Vagina (tissue), 2 donors: ENCODE measurements at regions of chr12 and their contacts with region 1.

Region 1: GRCh38 chr12:3692616-3693365 is 60.1 kb downstream of the CRACR2A start:
- DNase-seq: no peak
- H3K4me3 ChIP-seq: no peak overlapping the region
- H3K27ac ChIP-seq: no peak overlapping the region
- H3K4me1 ChIP-seq: no peaks in the 10 kb centered on the region
- H3K27me3 ChIP-seq: no peaks in the 10 kb centered on the region
- CTCF ChIP-seq: no peak
- POLR2A ChIP-seq: no peak

Region 2: DNA sequence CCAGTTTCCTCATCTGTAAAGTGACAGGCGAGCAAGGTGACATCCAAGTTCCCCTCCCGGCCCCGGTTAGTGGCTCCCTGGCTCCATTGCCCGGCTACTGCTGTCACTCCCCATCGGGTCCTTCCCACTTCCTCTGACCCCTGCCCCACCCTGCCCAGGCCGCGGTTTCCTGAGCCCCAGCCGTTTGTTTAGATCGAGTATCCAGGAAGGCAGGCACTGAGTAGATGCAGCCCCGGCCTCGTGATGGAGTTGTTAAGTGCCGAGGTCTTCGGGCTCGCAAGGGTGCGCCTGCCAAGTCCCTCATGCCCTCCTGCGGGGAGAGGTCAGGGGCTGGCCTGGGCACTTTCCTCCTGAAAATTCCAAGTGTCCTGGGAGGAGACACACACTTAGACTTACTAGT is 678.1 kb before region 1 on chr12:
- intact Hi-C with region 1: loop called (anchors 5 kb)
- DNase-seq: no peak
- H3K4me3 ChIP-seq: no peak overlapping the region
- H3K27ac ChIP-seq: no peak overlapping the region
- H3K4me1 ChIP-seq: no peaks in the 10 kb centered on the region
- H3K27me3 ChIP-seq: no peaks in the 10 kb centered on the region
- CTCF ChIP-seq: no peak
- POLR2A ChIP-seq: no peak

Region 3: GRCh38 chr12:3920351-3921150 is 227.8 kb after region 1 on chr12:
- intact Hi-C with region 1: no loop called
- DNase-seq: no peak
- H3K4me3 ChIP-seq: no peak overlapping the region
- H3K27ac ChIP-seq: no peak overlapping the region
- H3K4me1 ChIP-seq: no peaks in the 10 kb centered on the region
- H3K27me3 ChIP-seq: no peaks in the 10 kb centered on the region
- CTCF ChIP-seq: no peak
- POLR2A ChIP-seq: no peak

Region 4: DNA sequence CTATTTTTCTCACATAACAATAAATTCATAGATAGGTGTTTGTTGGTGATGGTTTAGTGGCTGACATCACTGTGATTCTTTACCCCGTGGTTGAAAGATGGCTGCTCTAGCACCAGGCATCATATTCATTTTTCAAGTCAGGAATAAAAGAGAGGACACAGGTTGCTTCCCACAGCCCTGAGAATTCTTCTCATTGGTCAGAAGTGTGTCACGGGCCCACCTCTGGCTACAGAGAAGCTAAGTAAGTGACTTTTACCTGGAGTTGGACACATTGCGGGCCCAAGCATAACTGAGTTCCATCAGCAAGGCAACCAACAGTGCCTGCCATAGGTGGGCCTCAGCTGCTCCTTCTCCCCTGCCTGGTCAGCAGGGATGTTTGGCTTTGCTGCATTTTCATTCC is 714.3 kb after region 1 on chr12:
- intact Hi-C with region 1: no loop called
- DNase-seq: no peak
- H3K4me3 ChIP-seq: no peak overlapping the region
- H3K27ac ChIP-seq: no peak overlapping the region
- H3K4me1 ChIP-seq: no peaks in the 10 kb centered on the region
- H3K27me3 ChIP-seq: no peaks in the 10 kb centered on the region
- CTCF ChIP-seq: no peak
- POLR2A ChIP-seq: no peak